PC-3 (cell line): ENCODE measurements at regions of chr5 and their contacts with region 1.

Region 1: DNA sequence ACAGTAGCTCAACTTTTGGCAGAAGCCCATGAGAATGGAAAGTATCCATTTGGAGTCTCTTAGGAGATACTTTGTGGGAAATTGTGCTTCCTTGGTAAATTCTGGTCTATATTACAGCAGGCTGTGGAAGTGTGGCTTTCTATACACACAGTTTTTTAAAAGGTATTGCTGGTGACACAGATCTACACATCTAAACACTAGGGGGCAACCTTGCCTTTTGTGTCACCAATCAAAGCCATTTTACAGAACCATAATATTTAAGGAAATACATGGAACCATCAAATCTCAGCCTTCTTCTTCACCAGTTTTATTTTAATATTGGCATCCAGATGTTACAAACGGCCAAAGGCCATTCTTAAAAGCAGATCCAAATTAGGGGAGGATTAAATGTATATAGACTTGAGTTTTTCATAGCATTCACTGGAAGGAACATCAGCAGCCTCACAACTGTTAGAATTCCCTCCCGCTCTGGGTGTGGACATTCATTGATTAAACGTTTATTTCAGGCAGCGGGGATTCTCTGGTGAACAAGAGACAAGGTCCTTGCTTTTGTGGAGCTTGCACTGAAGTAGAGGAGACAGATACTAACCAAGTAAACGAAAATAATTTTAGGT is 132.4 kb upstream of the EPB41L4A start:
- DNase-seq: peak; percentile 65
- ATAC-seq: peak; percentile 55; the same call in 1 of the 2 replicates
- H3K4me3 ChIP-seq: no peak overlapping the region
- H3K27ac ChIP-seq: no peak overlapping the region
- H3K4me1 ChIP-seq: peaks cover 24% of the 10 kb centered on the region
- H3K27me3 ChIP-seq: no peaks in the 10 kb centered on the region
- CTCF ChIP-seq: peak; percentile 78

Region 2: GRCh38 chr5:112684737-112685136 is 133.2 kb after region 1 on chr5:
- CTCF ChIA-PET with region 1: no interaction called
- POLR2A ChIA-PET with region 1: no interaction called
- intact Hi-C with region 1: loop called (anchors 5 kb)
- DNase-seq: no peak
- ATAC-seq: no peak
- H3K4me3 ChIP-seq: no peak overlapping the region
- H3K27ac ChIP-seq: no peak overlapping the region
- H3K4me1 ChIP-seq: no peaks in the 10 kb centered on the region
- H3K27me3 ChIP-seq: no peaks in the 10 kb centered on the region
- CTCF ChIP-seq: no peak

Region 3: DNA sequence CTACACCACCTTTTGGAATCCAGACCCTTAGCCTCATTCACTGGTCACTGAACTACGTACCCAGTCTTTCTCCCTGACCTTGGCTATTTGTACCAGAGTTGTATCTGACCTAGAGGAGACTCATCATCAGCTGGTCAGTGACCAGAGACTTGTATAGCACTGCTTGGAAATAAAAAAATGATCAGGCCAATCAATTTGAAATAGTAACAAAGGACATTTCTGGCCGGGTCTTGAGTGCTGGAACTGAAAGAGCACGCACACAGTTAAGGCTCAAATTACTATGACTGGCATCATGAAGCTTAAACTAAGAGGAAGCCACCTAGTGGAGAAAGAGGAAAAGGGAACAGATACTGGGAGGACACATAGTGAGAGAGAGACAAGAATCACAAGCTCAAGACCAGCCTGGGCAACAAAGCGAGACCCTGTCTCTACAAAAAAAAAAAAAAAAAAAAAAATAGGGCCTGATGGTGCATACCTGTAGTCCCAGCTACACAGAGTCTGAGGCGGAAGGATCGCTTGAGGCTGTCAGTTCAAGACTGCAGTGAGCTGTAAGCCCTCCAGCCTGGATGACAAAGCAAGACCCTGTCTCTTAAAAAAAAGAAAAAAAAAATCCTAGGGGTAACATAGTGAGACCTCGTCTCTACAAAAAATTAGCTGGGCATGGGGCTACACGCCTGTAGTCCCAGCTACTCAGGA is 296.7 kb after region 1 on chr5:
- CTCF ChIA-PET with region 1: interaction called, 7 read pairs
- POLR2A ChIA-PET with region 1: no interaction called
- intact Hi-C with region 1: loop called (anchors 1 kb)
- DNase-seq: peak; percentile 66
- ATAC-seq: peak; percentile 99
- H3K4me3 ChIP-seq: no peak overlapping the region
- H3K27ac ChIP-seq: no peak overlapping the region
- H3K4me1 ChIP-seq: no peaks in the 10 kb centered on the region
- H3K27me3 ChIP-seq: no peaks in the 10 kb centered on the region
- CTCF ChIP-seq: peak; percentile 67

Region 4: DNA sequence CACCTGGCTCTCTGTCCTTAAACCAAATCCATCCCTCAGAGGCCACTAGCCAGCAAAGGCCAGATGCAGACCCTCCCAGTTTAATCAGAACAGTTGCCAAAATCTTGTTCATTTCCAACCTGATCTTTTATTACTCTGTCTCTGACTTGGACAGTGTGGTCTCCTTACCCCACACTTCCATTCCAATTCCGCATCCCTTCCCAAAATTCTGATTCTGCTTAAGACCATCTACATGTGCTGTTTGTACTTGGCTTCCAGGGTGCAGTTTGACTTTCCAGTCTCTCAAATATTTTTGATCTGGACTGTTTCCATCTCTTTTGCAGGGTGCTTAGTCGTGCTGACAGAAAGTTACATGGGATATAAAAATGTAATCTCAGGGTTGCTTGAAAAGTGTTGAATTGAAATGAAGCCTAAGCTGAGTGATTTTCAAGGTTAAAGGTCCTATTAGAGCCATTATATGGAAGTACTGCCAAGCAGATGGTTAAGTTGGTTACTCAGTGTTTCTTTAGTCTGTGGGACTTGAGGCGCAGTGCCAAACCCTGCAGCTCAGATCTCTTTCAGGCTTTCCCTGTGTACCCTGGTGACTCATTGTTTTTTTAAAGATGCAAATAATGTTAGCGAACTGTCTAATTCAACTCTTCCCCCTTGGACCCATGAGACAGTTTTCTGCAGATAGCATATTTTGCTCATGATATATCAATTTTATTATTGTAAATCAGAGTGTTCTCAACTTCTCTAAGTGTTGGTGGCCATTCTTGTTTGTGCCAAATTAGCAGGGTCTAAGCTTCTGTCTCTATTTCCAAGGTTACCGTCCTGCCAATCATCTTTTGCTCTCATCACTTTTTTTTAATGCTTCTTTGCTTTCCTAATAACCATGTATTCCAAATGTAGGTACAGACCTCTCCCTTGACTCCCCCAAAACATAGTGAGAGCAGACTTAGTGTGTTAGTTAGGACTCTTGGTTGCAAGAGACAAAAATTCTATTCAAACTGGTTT is 406.9 kb after region 1 on chr5:
- CTCF ChIA-PET with region 1: no interaction called
- POLR2A ChIA-PET with region 1: no interaction called
- intact Hi-C with region 1: loop called (anchors 5 kb)
- DNase-seq: peak; percentile 96
- ATAC-seq: peak; percentile 86
- H3K4me3 ChIP-seq: peak overlapping the region; percentile 48
- H3K27ac ChIP-seq: peak overlapping the region; percentile 83
- H3K4me1 ChIP-seq: peaks cover 49% of the 10 kb centered on the region
- H3K27me3 ChIP-seq: no peaks in the 10 kb centered on the region
- CTCF ChIP-seq: no peak